HAP-1 (cell line): ENCODE measurements at regions of chr13 and their contacts with region 1.

Region 1: DNA sequence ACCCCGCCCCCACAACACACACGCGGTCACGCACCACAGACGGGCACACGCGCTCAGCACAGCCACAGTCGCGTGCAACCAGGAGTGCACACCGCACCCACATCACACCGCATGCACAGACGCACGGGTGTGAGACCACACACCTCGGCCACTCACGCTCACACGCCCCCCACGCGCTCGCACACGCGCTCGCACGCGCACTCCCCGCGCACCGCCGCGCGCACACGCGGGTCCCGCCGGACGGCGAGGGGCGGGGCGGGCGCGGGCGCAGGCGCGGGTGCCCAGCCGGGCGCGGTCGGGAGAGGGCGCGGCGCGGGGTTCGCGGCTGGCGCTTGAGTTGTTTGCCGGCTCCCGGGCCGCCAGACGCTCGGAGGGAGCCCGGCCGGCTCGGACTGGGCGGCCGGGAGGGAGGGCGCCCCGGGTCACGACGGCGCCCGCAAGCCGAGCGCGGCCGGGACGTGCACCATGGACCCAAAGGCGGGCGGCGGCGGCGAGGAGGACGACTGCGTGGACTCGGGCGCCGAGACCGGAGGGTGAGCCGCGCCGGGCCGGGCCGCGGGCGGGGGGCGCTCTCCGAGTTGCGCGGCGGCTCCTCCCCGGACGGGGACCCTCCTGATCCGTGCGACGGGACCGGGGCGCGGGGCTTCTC is at the start of gene FAM124A:
- DNase-seq: peak; percentile 46 to 75
- H3K4me3 ChIP-seq: peak within 1 kb of the TSS; percentile 78
- H3K4me1 ChIP-seq: peaks cover 18% of the 10 kb centered on the region
- H3K27me3 ChIP-seq: no peaks in the 10 kb centered on the region

Region 2: DNA sequence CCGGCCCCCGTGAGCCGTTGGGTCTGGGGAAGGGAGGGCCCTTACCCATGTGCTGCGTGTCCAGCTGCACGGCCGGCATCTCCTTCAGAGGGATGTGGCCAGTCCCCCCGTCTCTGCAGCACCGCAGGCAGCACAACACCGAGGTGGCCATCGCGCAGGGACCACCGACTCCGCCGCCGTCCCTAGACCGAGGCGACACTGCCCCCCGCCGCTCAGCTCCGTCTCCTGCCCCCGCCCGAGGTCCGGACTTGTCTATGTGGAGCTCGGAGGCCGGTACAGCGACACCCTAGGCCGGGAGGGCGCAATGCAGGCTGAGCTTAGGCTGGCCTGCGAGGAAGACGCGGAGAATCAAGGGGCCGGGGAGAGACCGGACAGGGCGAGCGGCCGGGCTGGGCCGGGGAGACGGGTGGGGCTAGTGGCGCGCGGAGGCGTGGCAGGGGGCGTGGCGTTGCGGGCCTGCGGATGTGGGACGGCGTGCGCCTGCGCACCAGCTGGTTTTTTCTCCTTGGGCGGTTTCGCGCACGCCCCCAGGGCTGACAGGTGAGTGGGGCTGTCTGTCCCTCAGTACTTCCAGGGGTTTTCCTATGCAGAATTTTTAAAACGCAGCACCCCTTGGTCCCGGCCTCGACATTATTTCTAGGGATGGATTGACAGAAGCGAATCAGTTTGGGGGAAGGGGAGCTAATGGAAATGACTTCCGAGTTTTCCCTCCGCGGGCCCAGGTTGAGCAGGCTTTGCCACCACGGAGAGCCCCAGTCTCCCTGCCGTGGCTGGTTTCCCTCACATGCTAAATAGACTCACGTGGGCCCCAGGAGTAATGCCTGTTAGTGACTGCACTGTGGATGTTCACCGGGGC is 1285.8 kb before region 1 on chr13 and contains the start of gene SPRYD7:
- in situ Hi-C with region 1: loop called (anchors 25 kb)
- DNase-seq: peak; percentile 94 to 99
- H3K4me3 ChIP-seq: peak within 1 kb of the TSS; percentile 81
- H3K4me1 ChIP-seq: peaks cover 28% of the 10 kb centered on the region
- H3K27me3 ChIP-seq: no peaks in the 10 kb centered on the region

Region 3: DNA sequence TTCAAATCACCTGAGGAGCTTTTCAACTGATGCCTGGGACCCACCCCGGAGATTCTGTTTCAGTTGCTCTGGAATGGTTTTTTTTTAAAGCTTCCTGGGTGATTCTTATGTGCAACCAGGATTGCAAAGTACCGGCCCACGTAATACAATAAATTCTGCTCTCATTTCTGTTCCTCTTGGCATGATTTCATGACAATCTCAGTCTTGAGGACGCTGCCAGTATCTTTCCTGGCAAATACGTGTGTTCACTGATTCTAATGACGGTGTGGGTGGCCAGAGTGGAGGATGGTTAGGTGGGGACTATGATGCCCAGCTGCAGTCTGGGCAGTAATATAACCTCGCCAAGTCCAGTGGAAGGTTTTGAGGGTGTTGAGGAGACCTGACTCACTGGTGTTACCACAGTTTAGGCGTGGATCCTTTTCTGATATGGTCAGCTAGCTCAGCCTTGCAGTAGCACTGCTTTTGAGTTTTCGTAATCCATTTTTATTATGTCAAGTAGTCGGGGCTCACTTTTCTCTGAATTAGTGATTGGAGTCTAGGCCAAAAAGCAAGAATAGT is 49.4 kb after region 1 on chr13:
- in situ Hi-C with region 1: loop called (anchors 5 kb)
- DNase-seq: peak in 1 of 2 experiments; percentile 41
- H3K4me3 ChIP-seq: no peak overlapping the region
- H3K4me1 ChIP-seq: peaks cover 43% of the 10 kb centered on the region
- H3K27me3 ChIP-seq: no peaks in the 10 kb centered on the region